ENCODE measurements at regions of chr15 and their contacts with region 1.

Region 1: DNA sequence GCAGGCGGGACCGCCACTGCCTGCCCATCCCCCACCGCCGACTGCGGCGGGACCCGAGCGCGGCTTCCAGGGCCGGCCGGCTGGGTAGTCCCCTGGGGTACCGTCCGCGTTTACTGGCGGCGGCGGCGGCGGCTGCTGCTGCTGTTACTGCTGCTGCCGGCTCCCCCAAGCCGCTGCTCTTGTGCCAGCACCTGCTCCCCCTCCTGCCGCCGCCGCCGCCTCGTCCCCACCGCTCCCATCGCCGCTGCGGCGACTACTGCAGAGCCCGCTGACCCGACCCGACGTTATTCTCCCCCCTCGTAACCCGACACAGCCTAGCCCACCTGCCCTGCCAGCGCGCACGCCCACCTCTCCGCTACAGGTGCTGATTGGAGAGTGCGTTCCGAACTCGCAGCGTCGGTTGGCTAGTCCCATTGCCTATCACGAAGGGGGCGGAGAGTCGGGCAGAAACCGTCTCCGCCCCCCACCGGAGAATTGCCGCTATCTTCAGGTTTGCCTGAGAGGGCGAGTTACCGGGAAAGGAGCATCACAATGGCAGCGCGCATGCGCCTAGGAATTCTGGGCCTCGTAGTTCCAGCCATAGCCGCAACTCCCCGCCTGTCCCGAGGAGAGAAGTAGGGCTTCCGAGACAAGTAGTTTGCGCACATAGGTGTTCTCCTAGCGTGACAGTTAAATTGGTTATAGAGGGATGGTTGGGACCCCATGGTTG is at the start of gene TTBK2:
- DNase-seq: peak; percentile 98
- H3K4me3 Mint-ChIP-seq: peak within 1 kb of the TSS; percentile 99
- H3K27ac Mint-ChIP-seq: peak within 1 kb of the TSS; percentile 92
- H3K4me1 Mint-ChIP-seq: peaks cover 22% of the 10 kb centered on the region
- H3K27me3 Mint-ChIP-seq: no peaks in the 10 kb centered on the region
- total RNA-seq, gene TTBK2: 13.5 to 15.7 TPM

Region 2: GRCh38 chr15:42575188-42576039 is 345.3 kb before region 1 on chr15 and contains the start of gene STARD9:
- CTCF ChIA-PET with region 1: no interaction called
- intact Hi-C with region 1: loop called (anchors 2 kb)
- DNase-seq: peak; percentile 95
- H3K4me3 Mint-ChIP-seq: peak within 1 kb of the TSS; percentile 86
- H3K27ac Mint-ChIP-seq: no peak within 1 kb of the TSS
- H3K4me1 Mint-ChIP-seq: peaks cover 14% of the 10 kb centered on the region
- H3K27me3 Mint-ChIP-seq: peaks cover 28% of the 10 kb centered on the region
- total RNA-seq, gene STARD9: 1.9 to 2.5 TPM

Region 3: DNA sequence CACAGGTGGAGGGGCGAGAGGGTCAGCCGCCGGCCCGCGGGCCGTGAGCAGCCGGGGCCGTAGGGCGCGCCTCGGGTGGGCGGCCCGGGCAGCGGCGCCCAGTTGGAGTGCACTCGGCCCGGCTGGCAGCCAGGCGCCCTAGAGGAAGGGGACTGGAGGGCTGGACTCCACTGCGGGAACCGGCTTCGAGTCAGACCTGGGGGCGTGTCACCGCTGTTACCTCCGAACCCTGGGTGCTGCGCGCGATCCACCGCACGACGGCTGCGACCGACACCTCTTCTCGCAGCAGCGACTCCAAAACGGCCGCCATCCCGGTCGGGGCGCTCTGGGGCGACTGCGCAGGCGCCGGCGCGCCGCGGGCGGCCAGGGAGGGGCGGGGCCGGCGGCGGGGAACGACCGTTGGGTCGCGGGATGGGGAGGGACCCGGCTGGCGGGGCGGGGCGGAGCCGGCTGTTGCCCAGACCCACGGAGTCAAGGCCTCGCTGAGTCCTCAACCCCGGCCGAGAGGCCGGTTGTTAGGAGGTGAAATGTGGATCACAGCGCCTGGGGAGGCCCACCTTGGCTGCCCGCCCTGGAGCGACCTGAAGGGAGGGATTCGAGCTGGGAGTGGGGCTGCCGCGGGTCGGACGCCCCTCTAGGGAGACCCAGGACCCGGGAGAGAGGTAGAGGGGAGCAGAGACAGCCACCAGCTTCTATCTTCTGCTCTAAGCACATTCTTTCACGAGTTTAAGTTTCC is 183.7 kb before region 1 on chr15 and contains the start of gene CDAN1:
- CTCF ChIA-PET with region 1: interaction called, 3 read pairs
- intact Hi-C with region 1: loop called (anchors 1 kb)
- DNase-seq: peak; percentile 92
- H3K4me3 Mint-ChIP-seq: peak within 1 kb of the TSS; percentile 78
- H3K27ac Mint-ChIP-seq: peak within 1 kb of the TSS; percentile 69
- H3K4me1 Mint-ChIP-seq: peaks cover 11% of the 10 kb centered on the region
- H3K27me3 Mint-ChIP-seq: no peaks in the 10 kb centered on the region
- total RNA-seq, gene CDAN1: 19.9 to 21.9 TPM

Region 4: GRCh38 chr15:42800731-42801474 is 119.8 kb before region 1 on chr15:
- CTCF ChIA-PET with region 1: interaction called, 19 read pairs
- intact Hi-C with region 1: no loop called
- DNase-seq: peak; percentile 13
- H3K4me3 Mint-ChIP-seq: no peak overlapping the region
- H3K27ac Mint-ChIP-seq: no peak overlapping the region
- H3K4me1 Mint-ChIP-seq: peaks cover 3% of the 10 kb centered on the region
- H3K27me3 Mint-ChIP-seq: no peaks in the 10 kb centered on the region

Region 5: DNA sequence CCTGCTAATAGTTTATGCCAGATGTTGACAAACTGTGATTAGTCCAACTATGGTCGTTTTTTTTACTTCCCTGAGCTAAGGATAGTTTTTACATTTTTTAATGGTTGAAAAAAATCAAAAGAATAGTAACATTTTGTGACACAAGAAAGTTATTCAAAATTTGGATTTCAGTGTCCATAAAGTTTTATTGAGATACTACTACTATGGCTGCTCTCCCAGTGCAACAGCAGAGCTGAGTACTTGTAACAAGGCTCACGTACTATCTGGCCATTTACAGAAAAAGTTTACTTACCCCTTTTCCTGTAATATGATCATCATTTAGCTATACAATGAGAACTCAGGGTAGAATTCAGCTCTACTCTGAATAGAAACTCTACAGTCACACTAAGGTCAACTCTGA is 201.2 kb after region 1 on chr15:
- CTCF ChIA-PET with region 1: no interaction called
- intact Hi-C with region 1: loop called (anchors 5 kb)
- DNase-seq: no peak
- H3K4me3 Mint-ChIP-seq: peak overlapping the region; percentile 80
- H3K27ac Mint-ChIP-seq: no peak overlapping the region
- H3K4me1 Mint-ChIP-seq: peaks cover 12% of the 10 kb centered on the region
- H3K27me3 Mint-ChIP-seq: peaks cover 5% of the 10 kb centered on the region

Region 6: GRCh38 chr15:43510200-43511011 is 589.7 kb after region 1 on chr15:
- CTCF ChIA-PET with region 1: no interaction called
- intact Hi-C with region 1: loop called (anchors 1 kb)
- DNase-seq: peak; percentile 96
- H3K4me3 Mint-ChIP-seq: peak overlapping the region; percentile 85
- H3K27ac Mint-ChIP-seq: peak overlapping the region; percentile 24
- H3K4me1 Mint-ChIP-seq: peaks cover 22% of the 10 kb centered on the region
- H3K27me3 Mint-ChIP-seq: peaks cover under 1% of the 10 kb centered on the region